GM12878 (cell line): ENCODE measurements at regions of chr13 and their contacts with region 1.

Region 1: GRCh38 chr13:22929381-22930126 is 251.2 kb upstream of the SGCG start:
- DNase-seq: no peak
- ATAC-seq: no peak
- H3K4me3 ChIP-seq: no peak overlapping the region
- H3K27ac ChIP-seq: no peak overlapping the region
- H3K4me1 ChIP-seq: no peaks in the 10 kb centered on the region
- H3K27me3 ChIP-seq: no peaks in the 10 kb centered on the region
- CTCF ChIP-seq: no peak
- EP300 ChIP-seq: no peak
- POLR2A ChIP-seq: no peak
- RAD21 ChIP-seq: no peak

Region 2: DNA sequence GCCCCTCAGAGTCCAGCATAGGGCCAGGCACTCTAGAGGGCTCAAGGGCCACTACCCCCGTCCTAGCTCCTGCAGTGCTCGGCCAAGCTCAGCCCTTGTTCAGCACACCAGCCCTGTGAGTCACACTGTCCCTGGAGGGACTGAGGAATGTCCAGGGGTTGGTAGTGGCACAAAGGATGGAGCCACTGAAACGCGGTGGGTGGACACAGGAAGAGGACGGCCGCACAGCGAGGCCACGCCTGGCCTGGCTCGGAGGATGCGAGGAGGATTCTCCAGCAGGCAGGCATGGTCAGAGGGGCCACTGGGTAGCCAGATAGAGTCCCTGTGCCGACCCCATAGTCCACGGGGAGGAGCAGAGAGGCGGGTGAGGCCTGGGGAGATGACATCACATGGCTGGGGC is 1425.5 kb after region 1 on chr13:
- CTCF ChIA-PET with region 1: no interaction called
- POLR2A ChIA-PET with region 1: no interaction called
- RAD21 ChIA-PET with region 1: no interaction called
- SMC1A ChIA-PET with region 1: no interaction called
- in situ Hi-C with region 1: no loop called
- intact Hi-C with region 1: loop called (anchors 10 kb)
- DNase-seq: no peak
- ATAC-seq: no peak; the same call in 2 of the 3 replicates
- H3K4me3 ChIP-seq: no peak overlapping the region
- H3K27ac ChIP-seq: no peak overlapping the region
- H3K4me1 ChIP-seq: no peaks in the 10 kb centered on the region
- H3K27me3 ChIP-seq: no peaks in the 10 kb centered on the region
- CTCF ChIP-seq: no peak
- EP300 ChIP-seq: no peak
- POLR2A ChIP-seq: no peak
- RAD21 ChIP-seq: no peak